ENCODE measurements at regions of chr15 and their contacts with region 1.

Region 1: GRCh38 chr15:78979456-78980320 is 34.8 kb upstream of the CTSH start:
- DNase-seq: no peak
- H3K4me3 ChIP-seq: no peak overlapping the region
- H3K27me3 ChIP-seq: no peaks in the 10 kb centered on the region
- CTCF ChIP-seq: peak; percentile 73

Region 2: GRCh38 chr15:78909791-78910228 is 69.9 kb before region 1 on chr15:
- CTCF ChIA-PET with region 1: interaction called, 33 read pairs
- POLR2A ChIA-PET with region 1: no interaction called
- DNase-seq: no peak
- H3K4me3 ChIP-seq: no peak overlapping the region
- H3K27me3 ChIP-seq: no peaks in the 10 kb centered on the region
- CTCF ChIP-seq: peak; percentile 69